HepG2 (cell line): ENCODE measurements at regions of chrX and their contacts with region 1.

Region 1: GRCh38 chrX:129360175-129360574 is 163.1 kb downstream of the SMARCA1 start:
- DNase-seq: peak; percentile 61
- ATAC-seq: peak; percentile 93
- H3K4me3 ChIP-seq: no peak overlapping the region
- H3K27ac ChIP-seq: no peak overlapping the region
- H3K4me1 ChIP-seq: 0 out of 2 replicates have a peak, but pooled peaks cover 8% of the 10 kb centered on the region
- H3K27me3 ChIP-seq: no peaks in the 10 kb centered on the region
- CTCF ChIP-seq: peak; percentile 74
- EP300 ChIP-seq: no peak
- POLR2A ChIP-seq: no peak
- RAD21 ChIP-seq: no peak; the same call in 1 of the 2 replicates

Region 2: GRCh38 chrX:128106630-128107029 is 1253.5 kb before region 1 on chrX:
- CTCF ChIA-PET with region 1: no interaction called
- POLR2A ChIA-PET with region 1: no interaction called
- in situ Hi-C with region 1: no loop called
- intact Hi-C with region 1: loop called (anchors 1 kb)
- DNase-seq: peak; percentile 3
- ATAC-seq: peak; percentile 85
- H3K4me3 ChIP-seq: no peak overlapping the region
- H3K27ac ChIP-seq: no peak overlapping the region
- H3K4me1 ChIP-seq: no peaks in the 10 kb centered on the region
- H3K27me3 ChIP-seq: no peaks in the 10 kb centered on the region
- CTCF ChIP-seq: peak; percentile 59
- EP300 ChIP-seq: no peak
- POLR2A ChIP-seq: no peak
- RAD21 ChIP-seq: no peak

Region 3: DNA sequence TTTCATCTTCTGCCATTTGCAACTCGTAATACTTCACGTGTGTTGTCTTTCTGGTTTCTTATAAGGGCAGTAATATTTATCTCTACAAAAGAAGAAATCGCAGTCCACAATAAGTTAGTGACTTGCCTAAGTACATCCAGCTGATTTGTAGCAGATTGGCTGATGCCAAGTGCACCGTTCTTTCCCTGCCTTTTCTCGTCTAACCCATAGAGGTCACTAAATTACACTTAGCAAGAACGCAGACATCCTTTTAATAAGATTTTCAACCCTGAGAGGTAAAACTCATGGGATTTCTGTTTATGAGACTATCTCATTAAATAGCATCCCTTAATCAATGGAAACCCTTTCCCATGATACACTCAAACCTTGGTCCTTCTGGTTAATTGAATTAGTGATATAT is 899.3 kb before region 1 on chrX:
- CTCF ChIA-PET with region 1: no interaction called
- POLR2A ChIA-PET with region 1: no interaction called
- in situ Hi-C with region 1: no loop called
- intact Hi-C with region 1: loop called (anchors 2 kb)
- DNase-seq: no peak
- ATAC-seq: peak; percentile 45; the same call in 1 of the 3 replicates
- H3K4me3 ChIP-seq: no peak overlapping the region
- H3K27ac ChIP-seq: no peak overlapping the region
- H3K4me1 ChIP-seq: peaks cover 9% of the 10 kb centered on the region
- H3K27me3 ChIP-seq: no peaks in the 10 kb centered on the region; a peak in 1 of 5 replicates
- CTCF ChIP-seq: no peak; the same call in 1 of the 2 replicates
- EP300 ChIP-seq: no peak
- POLR2A ChIP-seq: no peak
- RAD21 ChIP-seq: no peak

Region 4: GRCh38 chrX:128816919-128817318 is 543.3 kb before region 1 on chrX:
- CTCF ChIA-PET with region 1: no interaction called
- POLR2A ChIA-PET with region 1: no interaction called
- in situ Hi-C with region 1: no loop called
- intact Hi-C with region 1: loop called (anchors 5 kb)
- DNase-seq: peak; percentile 22
- ATAC-seq: peak; percentile 46; the same call in 1 of the 3 replicates
- H3K4me3 ChIP-seq: no peak overlapping the region
- H3K27ac ChIP-seq: no peak overlapping the region
- H3K4me1 ChIP-seq: no peaks in the 10 kb centered on the region; the same call in 1 of the 2 replicates
- H3K27me3 ChIP-seq: no peaks in the 10 kb centered on the region
- CTCF ChIP-seq: peak; percentile 42
- EP300 ChIP-seq: no peak
- POLR2A ChIP-seq: no peak
- RAD21 ChIP-seq: no peak

Region 5: GRCh38 chrX:128848374-128848773 is 511.8 kb before region 1 on chrX:
- CTCF ChIA-PET with region 1: no interaction called
- POLR2A ChIA-PET with region 1: no interaction called
- in situ Hi-C with region 1: no loop called
- intact Hi-C with region 1: no loop called
- DNase-seq: no peak
- ATAC-seq: no peak
- H3K4me3 ChIP-seq: no peak overlapping the region
- H3K27ac ChIP-seq: no peak overlapping the region
- H3K4me1 ChIP-seq: no peaks in the 10 kb centered on the region
- H3K27me3 ChIP-seq: no peaks in the 10 kb centered on the region
- CTCF ChIP-seq: no peak
- EP300 ChIP-seq: no peak
- POLR2A ChIP-seq: no peak
- RAD21 ChIP-seq: no peak